ENCODE measurements at regions of chr3 and their contacts with region 1.

Region 1: GRCh38 chr3:146189519-146190173 is 28.7 kb upstream of the PLOD2 start:
- DNase-seq: peak; percentile 46 to 70 (median 61)
- H3K4me3 ChIP-seq: no peak overlapping the region
- H3K27ac ChIP-seq: no peak overlapping the region
- H3K4me1 ChIP-seq: no peaks in the 10 kb centered on the region
- H3K27me3 ChIP-seq: no peaks in the 10 kb centered on the region

Region 2: GRCh38 chr3:145767909-145768308 is 421.7 kb before region 1 on chr3:
- CTCF ChIA-PET with region 1: no interaction called
- POLR2A ChIA-PET with region 1: no interaction called
- DNase-seq: peak in 1 of 3 donors; percentile 0
- H3K4me3 ChIP-seq: no peak overlapping the region
- H3K27ac ChIP-seq: no peak overlapping the region
- H3K4me1 ChIP-seq: no peaks in the 10 kb centered on the region
- H3K27me3 ChIP-seq: no peaks in the 10 kb centered on the region

Region 3: GRCh38 chr3:146065573-146066006 is 124.1 kb before region 1 on chr3:
- CTCF ChIA-PET with region 1: interaction called, 80 read pairs
- POLR2A ChIA-PET with region 1: no interaction called
- DNase-seq: peak; percentile 70 to 86 (median 77)
- H3K4me3 ChIP-seq: no peak overlapping the region
- H3K27ac ChIP-seq: no peak overlapping the region
- H3K4me1 ChIP-seq: no peaks in the 10 kb centered on the region
- H3K27me3 ChIP-seq: no peaks in the 10 kb centered on the region

Region 4: DNA sequence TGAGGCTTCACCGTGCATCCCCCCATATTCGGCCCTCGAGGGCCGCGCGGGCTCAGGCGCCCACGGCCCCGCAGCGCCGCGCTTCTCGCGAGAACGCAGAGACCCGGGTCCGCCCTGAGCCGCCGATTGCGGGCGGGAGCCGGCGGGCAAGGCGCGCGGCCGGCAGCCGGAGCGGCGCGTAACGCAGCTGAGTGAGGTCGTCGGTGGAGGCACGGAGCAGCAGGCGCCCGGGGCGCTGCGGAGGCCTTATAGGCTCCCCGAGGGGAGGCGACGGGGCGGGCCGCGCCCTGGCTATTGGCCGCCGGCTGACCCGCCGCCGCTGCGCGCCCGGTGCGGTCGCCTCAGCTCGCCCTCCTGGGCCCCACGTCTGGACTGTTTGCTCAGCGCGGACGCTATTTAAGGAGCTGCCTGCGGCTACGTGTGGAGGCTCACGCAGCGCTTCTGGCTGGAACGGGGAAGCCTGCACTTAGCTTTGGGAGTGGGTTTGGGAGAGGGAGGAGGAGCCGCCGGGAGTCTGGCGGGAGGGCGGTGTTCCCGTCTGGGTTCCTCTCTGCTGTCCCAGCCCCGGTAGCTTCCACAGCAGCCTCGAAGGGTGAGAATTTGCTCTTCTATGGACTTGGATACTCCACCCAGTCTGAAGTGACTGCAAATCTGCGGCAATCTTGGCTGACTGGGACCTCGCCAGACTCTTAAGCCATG is 28.5 kb before region 1 on chr3 and contains the start of gene PLOD2:
- CTCF ChIA-PET with region 1: interaction called, 43 read pairs
- POLR2A ChIA-PET with region 1: no interaction called
- DNase-seq: peak; percentile 79 to 92 (median 89)
- H3K4me3 ChIP-seq: peak within 1 kb of the TSS; percentile 64 to 99 (median 86)
- H3K27ac ChIP-seq: peak within 1 kb of the TSS; percentile 69 to 81
- H3K4me1 ChIP-seq: peaks cover 14 to 58% (median 29%) of the 10 kb centered on the region in 4 experiments
- H3K27me3 ChIP-seq: peaks cover 0 to 10% (median 0%) of the 10 kb centered on the region in 5 experiments

Region 5: DNA sequence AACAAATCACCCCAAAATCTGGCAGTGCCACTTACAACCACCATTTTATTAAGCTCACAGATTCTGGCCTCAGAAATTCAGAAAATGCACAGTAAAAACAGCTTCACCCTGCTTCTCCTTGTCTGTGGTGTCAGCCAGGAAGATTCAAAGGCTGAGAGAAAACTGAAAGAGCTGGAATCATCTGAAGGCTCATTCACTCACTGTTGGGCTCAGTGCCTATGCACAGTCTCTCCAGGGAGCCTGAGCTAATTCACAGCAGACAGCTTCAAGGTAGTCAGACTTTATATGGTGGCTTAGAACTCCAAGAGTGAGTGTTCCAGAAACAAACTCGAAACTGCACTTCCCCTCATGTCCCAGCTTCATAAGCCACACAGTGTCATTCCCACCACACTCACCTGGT is 12.1 kb before region 1 on chr3:
- CTCF ChIA-PET with region 1: interaction called, 24 read pairs
- POLR2A ChIA-PET with region 1: interaction called, 7 read pairs
- DNase-seq: no peak
- H3K4me3 ChIP-seq: no peak overlapping the region
- H3K27ac ChIP-seq: no peak overlapping the region
- H3K4me1 ChIP-seq: no peaks in the 10 kb centered on the region
- H3K27me3 ChIP-seq: no peaks in the 10 kb centered on the region

Region 6: GRCh38 chr3:146203776-146204175 is 14.1 kb after region 1 on chr3:
- CTCF ChIA-PET with region 1: interaction called, 24 read pairs
- POLR2A ChIA-PET with region 1: no interaction called
- DNase-seq: no peak
- H3K4me3 ChIP-seq: no peak overlapping the region
- H3K27ac ChIP-seq: no peak overlapping the region
- H3K4me1 ChIP-seq: no peaks in the 10 kb centered on the region
- H3K27me3 ChIP-seq: no peaks in the 10 kb centered on the region

Region 7: DNA sequence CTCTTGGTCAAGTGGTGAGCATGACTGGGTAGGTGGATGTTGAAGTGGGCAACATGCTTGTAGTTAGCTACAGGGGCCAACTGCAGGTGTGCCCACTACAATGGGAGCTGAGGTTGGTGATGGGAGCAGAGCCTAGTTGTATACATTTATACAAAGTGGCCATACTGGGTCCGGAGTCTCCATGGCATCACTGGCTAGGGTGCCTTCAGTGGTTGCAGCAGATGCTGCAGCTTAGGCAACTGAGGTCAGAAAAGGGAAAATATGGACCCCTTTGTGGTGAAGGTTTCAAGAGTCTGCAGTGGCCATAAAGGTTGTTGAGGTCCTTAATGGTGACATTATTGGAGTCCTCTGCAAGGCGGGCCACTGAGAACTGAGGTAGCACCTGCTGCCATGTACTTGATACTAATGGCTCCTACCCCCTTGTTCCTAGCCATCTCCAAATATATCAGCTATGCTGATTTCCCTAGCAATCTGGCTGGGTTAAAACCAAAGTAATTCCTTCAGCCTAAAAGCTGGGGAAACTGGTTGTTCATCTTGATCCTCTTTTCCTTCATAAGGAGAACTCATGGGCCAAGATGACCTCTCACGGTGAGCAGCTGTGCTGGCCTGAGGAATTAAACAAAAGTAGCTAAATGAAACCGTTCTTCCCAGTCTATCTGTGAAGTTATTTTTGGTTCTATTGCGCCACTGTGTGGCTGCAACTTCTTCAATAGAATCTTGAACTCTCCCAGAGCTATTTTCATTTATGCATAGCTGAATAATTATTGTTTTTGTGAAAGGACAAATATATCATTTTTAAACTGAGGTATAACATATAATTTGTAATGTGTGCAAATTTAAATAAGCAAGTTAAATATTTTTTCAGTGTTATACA is 137.3 kb after region 1 on chr3:
- CTCF ChIA-PET with region 1: interaction called, 47 read pairs
- POLR2A ChIA-PET with region 1: interaction called, 3 read pairs
- DNase-seq: peak; percentile 47 to 67 (median 51)
- H3K4me3 ChIP-seq: peak overlapping the region in 1 of 7 experiments; percentile 45
- H3K27ac ChIP-seq: no peak overlapping the region
- H3K4me1 ChIP-seq: peaks cover 0 to 2% (median 0%) of the 10 kb centered on the region in 4 experiments
- H3K27me3 ChIP-seq: no peaks in the 10 kb centered on the region

Region 8: DNA sequence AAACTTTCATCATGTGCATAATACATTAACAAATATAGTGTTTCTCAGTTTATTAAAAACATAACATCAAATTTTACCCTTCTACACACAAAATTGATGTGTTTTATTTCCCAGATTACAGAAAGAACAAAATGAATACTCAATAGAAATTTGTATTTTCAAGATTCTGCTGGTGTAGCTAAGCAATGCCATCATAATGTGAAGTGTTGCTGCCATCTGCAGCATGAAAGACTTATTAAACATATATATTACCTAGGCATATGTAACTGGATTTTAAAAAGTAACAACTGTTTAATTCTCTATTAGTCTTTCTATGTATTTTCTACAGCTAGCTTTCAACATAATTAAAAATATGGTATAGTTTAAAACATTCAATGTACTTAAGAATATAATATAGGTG is 388.0 kb after region 1 on chr3:
- CTCF ChIA-PET with region 1: interaction called, 14 read pairs
- POLR2A ChIA-PET with region 1: interaction called, 3 read pairs
- DNase-seq: peak; percentile 54 to 83 (median 77)
- H3K4me3 ChIP-seq: no peak overlapping the region
- H3K27ac ChIP-seq: no peak overlapping the region
- H3K4me1 ChIP-seq: no peaks in the 10 kb centered on the region
- H3K27me3 ChIP-seq: no peaks in the 10 kb centered on the region